Calu3 (cell line): ENCODE measurements at regions of chr2 and their contacts with region 1.

Region 1: GRCh38 chr2:2243666-2244065 is 87.4 kb downstream of the MYT1L start:
- DNase-seq: no peak
- H3K4me3 Mint-ChIP-seq: no peak overlapping the region
- H3K27ac Mint-ChIP-seq: no peak overlapping the region
- H3K4me1 Mint-ChIP-seq: no peaks in the 10 kb centered on the region
- H3K27me3 Mint-ChIP-seq: no peaks in the 10 kb centered on the region
- CTCF ChIP-seq: no peak

Region 2: GRCh38 chr2:2271469-2271941 is 27.8 kb after region 1 on chr2:
- CTCF ChIA-PET with region 1: no interaction called
- intact Hi-C with region 1: loop called (anchors 1 kb)
- DNase-seq: no peak
- H3K4me3 Mint-ChIP-seq: no peak overlapping the region
- H3K27ac Mint-ChIP-seq: no peak overlapping the region
- H3K4me1 Mint-ChIP-seq: no peaks in the 10 kb centered on the region
- H3K27me3 Mint-ChIP-seq: no peaks in the 10 kb centered on the region
- CTCF ChIP-seq: no peak